Dorsolateral prefrontal cortex (tissue), 120 donors: ENCODE measurements at regions of chr15 and their contacts with region 1.

Region 1: DNA sequence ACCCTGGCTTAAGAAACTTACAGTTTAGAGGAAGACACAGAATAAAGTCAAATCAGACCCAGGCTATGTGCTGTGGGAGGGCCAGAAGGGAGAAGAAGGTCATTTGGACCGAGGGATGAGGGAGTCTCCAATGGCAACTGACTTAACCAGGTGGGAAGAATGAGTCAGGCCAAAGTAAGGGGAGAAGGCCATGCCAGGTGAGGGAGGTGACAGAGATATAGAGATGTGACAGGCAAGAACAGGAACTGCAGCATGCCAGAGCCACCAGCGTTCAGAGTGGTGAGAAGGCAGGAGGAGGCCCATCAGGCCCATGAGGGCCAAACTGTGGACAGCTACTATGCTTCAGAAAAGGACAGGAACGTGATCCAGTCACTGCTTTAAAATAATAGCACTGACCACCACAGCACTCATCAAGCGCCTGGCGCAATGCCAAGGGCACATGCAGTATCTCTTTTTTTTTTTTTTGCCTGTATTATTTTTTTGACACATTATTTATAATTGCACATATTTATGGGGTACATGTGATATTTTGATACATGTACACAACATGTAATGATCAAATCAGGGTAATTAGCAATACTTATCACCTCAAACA is 154.3 kb upstream of the IGF1R start:
- DNase-seq: no peak
- H3K4me3 ChIP-seq: no peak overlapping the region
- H3K27ac ChIP-seq: no peak overlapping the region
- H3K27me3 ChIP-seq: no peaks in the 10 kb centered on the region
- CTCF ChIP-seq: no peak

Region 2: GRCh38 chr15:98537516-98538060 is 43.6 kb after region 1 on chr15:
- intact Hi-C with region 1: no loop called
- DNase-seq: no peak
- H3K4me3 ChIP-seq: no peak overlapping the region
- H3K27ac ChIP-seq: no peak overlapping the region
- H3K27me3 ChIP-seq: peaks cover 0 to 5% (median 0%) of the 10 kb centered on the region in 45 donors
- CTCF ChIP-seq: no peak

Region 3: DNA sequence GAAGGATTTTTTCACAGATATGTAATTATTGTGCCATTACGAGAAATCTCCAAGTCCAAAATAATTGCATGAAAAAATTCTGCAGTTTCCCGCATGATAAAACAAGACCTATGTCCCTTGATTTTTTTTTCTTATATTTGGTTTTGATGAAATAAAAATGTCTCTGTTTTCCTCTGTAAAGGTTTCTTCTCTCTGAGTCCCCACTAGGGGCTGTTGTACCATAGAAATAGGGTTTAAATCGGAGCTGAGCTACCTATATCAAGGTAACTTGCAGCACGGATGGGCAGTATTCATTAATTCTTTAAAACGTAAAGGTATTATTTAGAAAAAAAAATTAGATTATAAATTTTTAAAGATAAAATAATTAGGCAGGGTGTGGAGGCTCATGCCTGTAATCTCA is 87.7 kb after region 1 on chr15:
- intact Hi-C with region 1: loop called in 1 of 2 experiments (anchors 10 kb)
- DNase-seq: no peak
- H3K4me3 ChIP-seq: no peak overlapping the region
- H3K27ac ChIP-seq: no peak overlapping the region
- H3K27me3 ChIP-seq: peaks cover 0 to 96% (median 41%) of the 10 kb centered on the region in 45 donors
- CTCF ChIP-seq: no peak